ENCODE measurements at regions of chr4 and their contacts with region 1.

Region 1: DNA sequence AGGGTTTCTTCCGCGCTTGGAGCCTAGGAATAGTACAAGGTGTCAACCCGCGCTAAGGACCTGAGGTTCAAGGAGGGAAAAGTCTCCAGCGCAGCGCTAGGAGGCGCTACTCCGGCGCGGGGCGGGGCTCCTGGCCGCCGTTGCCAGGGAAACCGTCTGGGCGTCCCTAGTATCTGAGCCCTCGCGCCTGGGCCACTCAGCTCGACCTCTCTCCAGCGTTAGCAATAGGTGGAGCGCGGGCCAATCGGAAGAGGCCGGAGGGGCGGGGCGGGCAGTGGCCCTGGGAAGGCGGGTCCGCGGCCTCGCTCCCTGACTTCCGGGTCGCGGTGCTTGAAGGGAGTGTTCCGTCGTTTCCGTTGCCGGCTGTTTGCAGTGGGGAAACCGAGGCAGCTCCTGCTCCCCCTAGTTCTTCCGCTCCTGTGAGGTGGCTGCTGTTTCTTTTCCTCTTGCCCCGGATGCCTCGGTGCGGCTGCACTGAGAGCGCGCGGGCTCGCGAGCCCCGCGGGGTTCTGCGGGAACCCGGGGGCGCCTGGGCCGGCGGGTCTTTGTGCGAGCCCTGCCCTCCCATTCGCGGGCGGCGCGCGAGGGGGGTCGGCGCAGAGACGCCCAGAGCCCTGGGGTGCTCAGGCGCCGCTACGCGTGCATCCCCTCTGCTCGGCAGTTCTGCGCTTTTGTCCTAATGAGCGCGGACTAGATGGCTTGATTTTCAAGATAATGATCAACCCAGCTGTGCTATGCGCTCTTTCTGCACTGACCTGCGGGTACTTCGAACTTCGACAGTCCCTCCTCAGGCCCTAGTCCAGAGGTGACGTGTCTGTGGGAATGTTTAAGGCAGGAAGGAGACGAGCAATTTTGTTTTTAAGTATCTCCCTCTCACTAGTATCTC is at the start of gene ELMOD2:
- DNase-seq: peak; percentile 98
- H3K4me3 Mint-ChIP-seq: peak within 1 kb of the TSS; percentile 85
- H3K27ac Mint-ChIP-seq: peak within 1 kb of the TSS; percentile 35
- H3K4me1 Mint-ChIP-seq: peaks cover 11% of the 10 kb centered on the region
- H3K27me3 Mint-ChIP-seq: no peaks in the 10 kb centered on the region
- total RNA-seq, gene ELMOD2: 14.4 to 14.8 TPM

Region 2: GRCh38 chr4:139083956-139084803 is 1439.9 kb before region 1 on chr4:
- CTCF ChIA-PET with region 1: no interaction called
- intact Hi-C with region 1: loop called (anchors 5 kb)
- DNase-seq: peak; percentile 90
- H3K4me3 Mint-ChIP-seq: peak overlapping the region; percentile 99
- H3K27ac Mint-ChIP-seq: peak overlapping the region; percentile 99
- H3K4me1 Mint-ChIP-seq: peaks cover 30% of the 10 kb centered on the region
- H3K27me3 Mint-ChIP-seq: no peaks in the 10 kb centered on the region

Region 3: GRCh38 chr4:139453371-139454110 is 1070.6 kb before region 1 on chr4:
- CTCF ChIA-PET with region 1: no interaction called
- intact Hi-C with region 1: loop called (anchors 1 kb)
- DNase-seq: peak; percentile 98
- H3K4me3 Mint-ChIP-seq: peak overlapping the region; percentile 97
- H3K27ac Mint-ChIP-seq: peak overlapping the region; percentile 98
- H3K4me1 Mint-ChIP-seq: peaks cover 50% of the 10 kb centered on the region
- H3K27me3 Mint-ChIP-seq: no peaks in the 10 kb centered on the region

Region 4: DNA sequence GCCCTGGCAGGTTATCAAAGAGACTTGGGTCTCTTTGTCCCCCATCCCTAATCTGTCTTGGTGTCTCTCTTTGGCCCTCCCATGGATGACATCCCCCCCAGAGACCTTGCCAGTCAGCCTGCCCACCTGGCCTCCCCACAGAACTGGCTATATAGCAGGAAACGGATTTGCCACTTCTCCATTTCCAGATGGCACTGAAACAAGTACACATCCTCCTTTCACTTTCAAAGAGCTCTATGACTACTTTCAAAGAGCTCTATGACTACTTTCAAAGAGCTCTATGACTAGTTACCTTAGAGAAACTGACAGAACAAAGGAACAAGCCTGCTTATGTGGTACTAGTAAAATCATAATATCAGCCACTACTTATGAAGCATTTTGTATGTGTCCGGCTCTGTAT is 545.4 kb before region 1 on chr4:
- CTCF ChIA-PET with region 1: no interaction called
- intact Hi-C with region 1: no loop called
- DNase-seq: peak; percentile 45
- H3K4me3 Mint-ChIP-seq: no peak overlapping the region
- H3K27ac Mint-ChIP-seq: no peak overlapping the region
- H3K4me1 Mint-ChIP-seq: peaks cover 22% of the 10 kb centered on the region
- H3K27me3 Mint-ChIP-seq: no peaks in the 10 kb centered on the region

Region 5: GRCh38 chr4:140373328-140374129 is 150.6 kb before region 1 on chr4 and contains the start of gene SCOC:
- CTCF ChIA-PET with region 1: interaction called, 4 read pairs
- intact Hi-C with region 1: loop called (anchors 1 kb)
- DNase-seq: peak; percentile 99
- H3K4me3 Mint-ChIP-seq: no peak within 1 kb of the TSS
- H3K27ac Mint-ChIP-seq: peak within 1 kb of the TSS; percentile 69
- H3K4me1 Mint-ChIP-seq: peaks cover 33% of the 10 kb centered on the region
- H3K27me3 Mint-ChIP-seq: no peaks in the 10 kb centered on the region
- total RNA-seq, gene SCOC: 44.7 to 49.4 TPM

Region 6: DNA sequence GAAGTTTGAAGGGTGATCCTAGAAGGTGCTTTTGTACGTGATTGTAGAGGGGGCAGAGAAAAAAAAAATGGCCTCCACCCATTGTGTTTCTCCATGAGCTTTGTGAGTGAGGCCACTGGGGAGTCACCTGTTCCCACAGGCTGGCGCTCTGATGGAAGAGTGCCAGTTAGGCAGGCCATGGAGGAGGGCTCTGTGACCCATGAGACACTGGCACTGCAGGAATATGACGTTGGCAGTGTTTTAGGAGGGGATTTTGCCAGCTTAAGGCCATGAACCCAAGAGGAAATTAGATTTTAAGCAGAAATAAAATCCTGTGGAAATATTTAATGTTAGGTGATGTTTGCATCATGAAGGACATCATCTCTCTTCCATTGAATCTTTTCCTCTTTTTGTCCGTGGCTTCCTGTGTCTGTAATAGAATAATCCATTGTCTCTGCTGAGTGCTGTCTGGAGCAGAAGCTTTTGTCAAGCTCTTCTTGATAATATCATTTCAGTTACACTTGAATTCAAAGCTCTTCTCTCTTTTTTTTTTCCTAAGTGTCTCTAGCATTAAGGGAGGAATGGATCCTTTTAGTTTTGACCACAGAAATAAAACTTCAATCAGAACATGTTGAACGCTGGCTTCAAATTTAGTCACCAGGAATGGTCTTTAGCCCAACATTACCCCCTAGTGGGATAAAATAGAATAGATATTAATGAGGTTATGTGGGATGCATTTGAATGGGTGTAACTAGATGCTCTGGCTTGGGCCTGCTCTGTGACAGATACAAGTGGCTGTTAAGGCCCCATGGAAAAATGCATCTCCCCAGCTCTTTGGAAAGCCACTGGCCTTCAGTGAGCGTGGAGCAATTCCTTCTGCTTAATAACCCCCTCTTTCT is 85.7 kb after region 1 on chr4:
- CTCF ChIA-PET with region 1: interaction called, 9 read pairs
- intact Hi-C with region 1: loop called (anchors 1 kb)
- DNase-seq: no peak
- H3K4me3 Mint-ChIP-seq: no peak overlapping the region
- H3K27ac Mint-ChIP-seq: no peak overlapping the region
- H3K4me1 Mint-ChIP-seq: peaks cover 1% of the 10 kb centered on the region
- H3K27me3 Mint-ChIP-seq: peaks cover 6% of the 10 kb centered on the region

Region 7: GRCh38 chr4:140851032-140851636 is 327.0 kb after region 1 on chr4:
- CTCF ChIA-PET with region 1: no interaction called
- intact Hi-C with region 1: loop called (anchors 1 kb)
- DNase-seq: peak; percentile 54
- H3K4me3 Mint-ChIP-seq: no peak overlapping the region
- H3K27ac Mint-ChIP-seq: no peak overlapping the region
- H3K4me1 Mint-ChIP-seq: no peaks in the 10 kb centered on the region
- H3K27me3 Mint-ChIP-seq: peaks cover 21% of the 10 kb centered on the region